MCF 10A (cell line): ENCODE measurements at regions of chr15 and their contacts with region 1.

Region 1: DNA sequence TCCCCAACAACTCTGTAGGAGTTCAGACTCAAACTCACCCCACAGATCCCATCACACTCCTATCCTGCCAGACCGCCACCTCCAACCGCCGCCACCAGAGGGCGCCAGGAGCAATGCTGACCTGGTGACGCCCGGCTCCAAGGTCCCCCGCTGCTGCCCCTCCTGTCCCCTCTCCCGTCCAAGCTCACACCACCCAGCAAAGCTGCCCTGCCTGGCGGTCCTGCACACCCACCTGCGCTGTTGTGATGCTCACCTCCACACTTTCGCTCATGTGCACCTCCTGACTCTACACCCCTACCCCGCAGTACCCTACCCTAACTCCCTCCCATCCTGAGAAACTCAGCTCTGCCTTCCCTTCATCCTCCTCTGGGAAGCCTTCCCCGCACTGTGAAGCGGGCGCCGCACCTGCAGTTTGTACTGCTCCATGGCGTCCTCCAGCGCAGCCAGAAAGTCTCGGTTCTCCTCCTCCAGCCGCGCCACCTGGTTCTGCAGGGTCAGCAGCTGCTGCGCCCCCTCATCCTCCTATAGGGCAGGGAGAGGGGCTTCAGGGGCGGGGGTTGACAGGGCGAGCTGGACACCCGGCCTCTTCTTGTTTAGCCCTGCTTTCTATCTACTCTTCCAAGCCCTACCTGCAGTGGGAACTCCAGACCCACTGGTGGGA is 7.9 kb downstream of the KIF7 start:
- DNase-seq: peak; percentile 63
- H3K4me3 Mint-ChIP-seq: peak overlapping the region; percentile 27
- H3K27ac Mint-ChIP-seq: no peak overlapping the region
- H3K4me1 Mint-ChIP-seq: no peaks in the 10 kb centered on the region
- H3K27me3 Mint-ChIP-seq: no peaks in the 10 kb centered on the region
- CTCF ChIP-seq: peak; percentile 88

Region 2: DNA sequence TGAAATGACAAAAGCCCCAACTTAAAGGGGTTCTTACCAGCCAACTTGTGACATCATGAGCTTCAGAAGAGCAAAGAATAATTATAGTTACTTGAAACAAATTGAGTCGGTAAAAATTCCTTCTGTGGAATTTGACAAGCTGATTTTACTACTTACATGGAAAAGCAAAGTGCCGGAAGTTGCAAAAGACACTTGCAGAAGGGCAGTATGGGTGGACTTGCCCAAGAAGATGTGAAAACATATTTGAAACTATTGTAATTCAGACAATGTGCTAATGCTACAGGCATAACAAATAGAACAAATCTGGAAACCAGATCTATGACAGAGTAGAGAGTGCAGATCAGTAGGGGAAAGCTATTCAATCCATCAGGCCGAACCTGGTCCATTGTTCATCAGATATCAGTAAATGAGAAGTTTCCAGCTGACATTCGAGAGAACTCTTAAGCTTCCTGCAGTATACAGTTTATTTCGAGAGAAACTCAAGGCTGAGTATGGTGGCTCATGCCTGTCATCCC is 10.4 kb after region 1 on chr15:
- CTCF ChIA-PET with region 1: interaction called, 32 read pairs
- POLR2A ChIA-PET with region 1: interaction called, 5 read pairs
- intact Hi-C with region 1: no loop called
- DNase-seq: no peak
- H3K4me3 Mint-ChIP-seq: no peak overlapping the region
- H3K27ac Mint-ChIP-seq: no peak overlapping the region
- H3K4me1 Mint-ChIP-seq: peaks cover 6% of the 10 kb centered on the region
- H3K27me3 Mint-ChIP-seq: peaks cover 21% of the 10 kb centered on the region
- CTCF ChIP-seq: no peak

Region 3: GRCh38 chr15:89662893-89663626 is 15.7 kb after region 1 on chr15:
- CTCF ChIA-PET with region 1: interaction called, 32 read pairs
- POLR2A ChIA-PET with region 1: interaction called, 5 read pairs
- intact Hi-C with region 1: no loop called
- DNase-seq: peak; percentile 90
- H3K4me3 Mint-ChIP-seq: peak overlapping the region; percentile 61
- H3K27ac Mint-ChIP-seq: peak overlapping the region; percentile 91
- H3K4me1 Mint-ChIP-seq: peaks cover 12% of the 10 kb centered on the region
- H3K27me3 Mint-ChIP-seq: no peaks in the 10 kb centered on the region
- CTCF ChIP-seq: no peak

Region 4: DNA sequence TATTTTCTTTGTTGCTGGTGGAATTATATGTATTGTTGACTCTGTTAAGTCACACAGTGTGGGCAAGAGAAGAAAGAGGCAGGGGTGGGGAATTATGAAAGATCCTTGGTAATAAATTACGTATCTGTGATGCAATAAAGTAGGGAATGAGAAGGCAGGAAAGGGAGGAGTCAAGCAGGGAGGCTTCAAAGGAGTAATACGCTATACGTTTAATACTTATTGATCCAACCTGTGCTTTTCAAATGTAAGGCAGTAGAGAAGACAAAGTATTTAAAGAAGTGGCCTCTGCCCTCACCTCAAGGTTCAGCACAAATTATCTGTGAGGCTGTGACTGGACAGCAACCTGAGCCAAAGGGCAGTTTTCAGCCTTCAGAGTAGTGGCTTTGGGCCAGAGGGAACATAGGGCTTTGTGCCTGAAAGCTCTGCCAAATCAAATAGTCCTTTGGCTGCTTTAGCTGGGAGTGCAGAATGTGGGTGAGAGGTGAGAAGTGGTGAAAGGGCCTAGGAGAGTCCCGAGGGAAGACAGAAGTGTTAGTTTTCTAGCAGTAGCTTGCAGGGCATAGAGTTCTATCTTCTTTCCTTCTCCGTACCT is 33.1 kb after region 1 on chr15:
- CTCF ChIA-PET with region 1: interaction called, 10 read pairs
- POLR2A ChIA-PET with region 1: interaction called, 3 read pairs
- intact Hi-C with region 1: no loop called
- DNase-seq: peak; percentile 94
- H3K4me3 Mint-ChIP-seq: peak overlapping the region; percentile 3
- H3K27ac Mint-ChIP-seq: peak overlapping the region; percentile 70
- H3K4me1 Mint-ChIP-seq: peaks cover 22% of the 10 kb centered on the region
- H3K27me3 Mint-ChIP-seq: no peaks in the 10 kb centered on the region
- CTCF ChIP-seq: no peak

Region 5: DNA sequence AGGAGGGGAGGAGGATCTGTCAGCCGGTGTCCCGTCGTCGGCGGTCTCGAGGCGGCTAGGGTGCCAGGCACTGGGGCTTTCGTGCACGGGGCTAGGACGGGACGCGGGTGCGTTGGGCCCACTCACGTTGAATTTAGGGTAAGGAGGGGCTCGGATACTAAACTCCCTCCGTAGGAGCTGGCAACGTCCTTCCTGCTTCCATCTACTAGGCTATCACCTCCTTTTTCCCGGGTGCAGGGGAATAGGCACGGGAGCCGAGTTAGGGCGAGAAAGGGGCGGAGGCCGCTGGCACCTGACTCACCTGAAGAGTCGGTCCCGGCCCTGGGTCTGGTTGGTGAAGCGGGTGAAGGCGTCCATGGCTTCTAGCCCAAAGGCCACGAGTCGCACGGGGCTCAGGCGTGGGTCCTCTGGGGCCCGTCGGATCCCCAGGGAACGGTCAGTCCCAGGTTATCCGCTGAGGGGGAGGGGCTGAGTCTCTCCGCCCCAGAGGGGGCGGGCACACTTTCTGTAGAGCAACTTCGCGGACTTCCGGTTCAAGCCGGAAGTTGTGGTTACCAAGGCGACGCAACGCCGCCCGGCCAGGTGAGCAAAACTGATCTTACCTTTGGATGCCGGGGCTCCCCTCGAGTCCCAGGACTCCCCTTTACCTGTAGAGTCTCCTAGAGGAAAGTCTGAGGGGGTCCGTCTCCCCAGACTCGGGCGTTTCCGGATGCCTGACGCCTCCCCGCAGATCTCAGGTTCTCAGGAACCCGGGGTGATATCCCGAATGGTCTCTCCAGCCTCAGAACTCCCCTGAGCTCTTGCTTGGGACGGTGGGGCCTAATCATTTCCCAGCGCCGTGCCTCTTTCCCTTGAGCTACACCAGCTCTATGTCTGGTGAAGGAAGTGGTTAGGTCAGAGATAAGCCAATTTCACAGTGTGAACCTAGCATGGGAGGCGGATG is 43.2 kb after region 1 on chr15 and contains the starts of genes PEX11A and WDR93:
- CTCF ChIA-PET with region 1: interaction called, 4 read pairs
- POLR2A ChIA-PET with region 1: no interaction called
- intact Hi-C with region 1: loop called (anchors 5 kb)
- DNase-seq: peak; percentile 82
- H3K4me3 Mint-ChIP-seq: peak within 1 kb of the TSS; percentile 78
- H3K27ac Mint-ChIP-seq: peak within 1 kb of the TSS; percentile 67
- H3K4me1 Mint-ChIP-seq: peaks cover 5% of the 10 kb centered on the region
- H3K27me3 Mint-ChIP-seq: no peaks in the 10 kb centered on the region
- CTCF ChIP-seq: no peak
- total RNA-seq, gene PEX11A: 3.4 and 3.9 TPM in 2 replicates
- total RNA-seq, gene WDR93: 0.33 and 0.47 TPM in 2 replicates

Region 6: GRCh38 chr15:89732451-89733172 is 85.3 kb after region 1 on chr15:
- CTCF ChIA-PET with region 1: interaction called, 6 read pairs
- POLR2A ChIA-PET with region 1: interaction called, 3 read pairs
- intact Hi-C with region 1: loop called (anchors 10 kb)
- DNase-seq: no peak
- H3K4me3 Mint-ChIP-seq: no peak overlapping the region
- H3K27ac Mint-ChIP-seq: no peak overlapping the region
- H3K4me1 Mint-ChIP-seq: no peaks in the 10 kb centered on the region
- H3K27me3 Mint-ChIP-seq: peaks cover 38% of the 10 kb centered on the region
- CTCF ChIP-seq: no peak

Region 7: GRCh38 chr15:90054618-90055097 is 407.3 kb after region 1 on chr15:
- CTCF ChIA-PET with region 1: no interaction called
- POLR2A ChIA-PET with region 1: no interaction called
- intact Hi-C with region 1: no loop called
- DNase-seq: no peak
- H3K4me3 Mint-ChIP-seq: no peak overlapping the region
- H3K27ac Mint-ChIP-seq: peak overlapping the region; percentile 68
- H3K4me1 Mint-ChIP-seq: peaks cover 14% of the 10 kb centered on the region
- H3K27me3 Mint-ChIP-seq: no peaks in the 10 kb centered on the region
- CTCF ChIP-seq: no peak